CD8-positive, alpha-beta T cell (primary cell): ENCODE measurements at regions of chr12 and their contacts with region 1.

Region 1: DNA sequence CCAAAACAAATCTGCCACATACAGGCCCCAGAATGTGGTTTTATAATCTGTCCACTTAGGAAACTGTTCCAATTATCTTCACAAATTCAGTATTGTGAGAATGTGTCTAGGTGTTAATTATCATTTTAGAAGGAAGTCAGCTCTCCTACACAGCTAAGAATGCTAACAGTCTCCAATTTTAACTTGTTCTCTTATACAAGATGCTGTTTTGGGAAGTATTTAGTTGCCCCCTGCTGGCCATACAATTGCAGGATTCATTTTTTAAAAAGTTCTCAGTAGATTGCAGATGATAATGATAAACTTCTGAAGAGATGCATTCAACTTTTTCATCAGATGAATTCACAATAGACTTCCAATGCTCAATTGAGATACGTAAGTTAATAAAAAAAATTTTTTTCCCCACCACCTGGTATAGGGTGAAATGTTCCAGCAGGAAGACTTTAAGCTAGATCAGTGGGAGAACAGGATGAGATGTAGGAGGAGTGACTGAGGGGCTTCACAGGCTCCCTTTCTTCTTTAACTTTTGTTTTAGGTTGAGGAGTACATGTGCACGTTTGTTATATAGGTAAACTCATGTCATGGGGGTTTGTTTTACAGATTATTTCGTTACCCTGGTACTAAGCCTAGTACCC is 27.3 kb upstream of the OSBPL8 start:
- DNase-seq: peak in 8 of 9 experiments; percentile 2 to 74 (median 44)
- ATAC-seq: peak; percentile 68
- H3K4me3 ChIP-seq: no peak overlapping the region
- H3K4me3 Mint-ChIP-seq: no peak overlapping the region
- H3K27ac ChIP-seq: no peak overlapping the region
- H3K27ac Mint-ChIP-seq: no peak overlapping the region
- H3K4me1 ChIP-seq: no peaks in the 10 kb centered on the region
- H3K4me1 Mint-ChIP-seq: peaks cover 2% of the 10 kb centered on the region
- H3K27me3 ChIP-seq: no peaks in the 10 kb centered on the region
- H3K27me3 Mint-ChIP-seq: no peaks in the 10 kb centered on the region
- CTCF ChIP-seq: peak; percentile 93

Region 2: GRCh38 chr12:75526655-75527511 is 1060.0 kb before region 1 on chr12:
- CTCF ChIA-PET with region 1: interaction called, 14 read pairs
- POLR2A ChIA-PET with region 1: no interaction called
- intact Hi-C with region 1: loop called in 1 of 2 experiments (anchors 5 kb)
- DNase-seq: peak in 2 of 9 experiments; percentile 45 to 60
- ATAC-seq: no peak
- H3K4me3 ChIP-seq: no peak overlapping the region
- H3K4me3 Mint-ChIP-seq: no peak overlapping the region
- H3K27ac ChIP-seq: no peak overlapping the region
- H3K27ac Mint-ChIP-seq: no peak overlapping the region
- H3K4me1 ChIP-seq: no peaks in the 10 kb centered on the region
- H3K4me1 Mint-ChIP-seq: peaks cover 1% of the 10 kb centered on the region
- H3K27me3 ChIP-seq: peaks cover 0 to 4% of the 10 kb centered on the region in 2 experiments
- H3K27me3 Mint-ChIP-seq: peaks cover 17% of the 10 kb centered on the region
- CTCF ChIP-seq: peak; percentile 60

Region 3: GRCh38 chr12:76356094-76356493 is 230.8 kb before region 1 on chr12:
- CTCF ChIA-PET with region 1: no interaction called
- POLR2A ChIA-PET with region 1: no interaction called
- intact Hi-C with region 1: loop called in 1 of 2 experiments (anchors 10 kb)
- DNase-seq: no peak
- ATAC-seq: no peak
- H3K4me3 ChIP-seq: no peak overlapping the region
- H3K4me3 Mint-ChIP-seq: no peak overlapping the region
- H3K27ac ChIP-seq: no peak overlapping the region
- H3K27ac Mint-ChIP-seq: no peak overlapping the region
- H3K4me1 ChIP-seq: no peaks in the 10 kb centered on the region
- H3K4me1 Mint-ChIP-seq: no peaks in the 10 kb centered on the region
- H3K27me3 ChIP-seq: no peaks in the 10 kb centered on the region
- H3K27me3 Mint-ChIP-seq: no peaks in the 10 kb centered on the region
- CTCF ChIP-seq: no peak

Region 4: GRCh38 chr12:76398106-76398505 is 188.8 kb before region 1 on chr12:
- CTCF ChIA-PET with region 1: interaction called, 4 read pairs
- POLR2A ChIA-PET with region 1: no interaction called
- intact Hi-C with region 1: loop called (anchors 5 kb)
- DNase-seq: no peak
- ATAC-seq: no peak
- H3K4me3 ChIP-seq: no peak overlapping the region
- H3K4me3 Mint-ChIP-seq: no peak overlapping the region
- H3K27ac ChIP-seq: no peak overlapping the region
- H3K27ac Mint-ChIP-seq: no peak overlapping the region
- H3K4me1 ChIP-seq: no peaks in the 10 kb centered on the region
- H3K4me1 Mint-ChIP-seq: no peaks in the 10 kb centered on the region
- H3K27me3 ChIP-seq: no peaks in the 10 kb centered on the region
- H3K27me3 Mint-ChIP-seq: no peaks in the 10 kb centered on the region
- CTCF ChIP-seq: no peak

Region 5: GRCh38 chr12:76637807-76638206 is 50.9 kb after region 1 on chr12:
- CTCF ChIA-PET with region 1: no interaction called
- POLR2A ChIA-PET with region 1: no interaction called
- intact Hi-C with region 1: no loop called
- DNase-seq: no peak
- ATAC-seq: no peak
- H3K4me3 ChIP-seq: no peak overlapping the region
- H3K4me3 Mint-ChIP-seq: no peak overlapping the region
- H3K27ac ChIP-seq: no peak overlapping the region
- H3K27ac Mint-ChIP-seq: no peak overlapping the region
- H3K4me1 ChIP-seq: no peaks in the 10 kb centered on the region
- H3K4me1 Mint-ChIP-seq: no peaks in the 10 kb centered on the region
- H3K27me3 ChIP-seq: no peaks in the 10 kb centered on the region
- H3K27me3 Mint-ChIP-seq: no peaks in the 10 kb centered on the region
- CTCF ChIP-seq: no peak